Activated CD4-positive, alpha-beta T cell treated with anti-CD3 and anti-CD28 coated beads, Interleukin-2, amount 10 ng/mL, durations not matched to agents 24 days and 14 days (primary cell): ENCODE measurements at regions of chr17 and their contacts with region 1.

Region 1: DNA sequence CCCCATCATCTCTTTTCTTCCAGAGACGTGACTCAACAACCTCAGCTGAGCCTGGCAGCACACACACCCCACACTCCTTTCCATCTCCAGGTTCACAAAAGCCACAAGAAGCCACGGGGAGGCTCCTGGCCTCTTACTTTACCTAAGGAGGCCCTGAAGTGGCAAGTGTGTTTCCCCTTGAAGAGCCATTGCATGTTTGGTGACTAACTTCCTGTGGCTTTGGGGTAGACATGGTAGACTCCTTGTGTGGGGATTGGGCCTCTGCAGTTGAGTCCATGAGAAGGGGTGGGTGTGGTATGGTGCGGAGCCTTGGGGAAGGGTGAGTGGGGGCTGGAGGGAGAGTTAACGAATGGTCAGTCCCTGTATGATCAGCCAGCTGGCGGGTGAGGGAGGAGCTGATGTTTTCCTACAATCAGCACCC is 24.2 kb downstream of the SAP30BP start:
- DNase-seq: peak; percentile 79
- H3K4me3 Mint-ChIP-seq: peak overlapping the region; percentile 9
- H3K27ac Mint-ChIP-seq: peak overlapping the region; percentile 81
- H3K4me1 Mint-ChIP-seq: peaks cover 51% of the 10 kb centered on the region
- H3K27me3 Mint-ChIP-seq: no peaks in the 10 kb centered on the region

Region 2: GRCh38 chr17:73984941-73985340 is 1706.4 kb before region 1 on chr17:
- intact Hi-C with region 1: no loop called
- DNase-seq: no peak
- H3K4me3 Mint-ChIP-seq: no peak overlapping the region
- H3K27ac Mint-ChIP-seq: no peak overlapping the region
- H3K4me1 Mint-ChIP-seq: peaks cover 4% of the 10 kb centered on the region
- H3K27me3 Mint-ChIP-seq: peaks cover 3% of the 10 kb centered on the region

Region 3: DNA sequence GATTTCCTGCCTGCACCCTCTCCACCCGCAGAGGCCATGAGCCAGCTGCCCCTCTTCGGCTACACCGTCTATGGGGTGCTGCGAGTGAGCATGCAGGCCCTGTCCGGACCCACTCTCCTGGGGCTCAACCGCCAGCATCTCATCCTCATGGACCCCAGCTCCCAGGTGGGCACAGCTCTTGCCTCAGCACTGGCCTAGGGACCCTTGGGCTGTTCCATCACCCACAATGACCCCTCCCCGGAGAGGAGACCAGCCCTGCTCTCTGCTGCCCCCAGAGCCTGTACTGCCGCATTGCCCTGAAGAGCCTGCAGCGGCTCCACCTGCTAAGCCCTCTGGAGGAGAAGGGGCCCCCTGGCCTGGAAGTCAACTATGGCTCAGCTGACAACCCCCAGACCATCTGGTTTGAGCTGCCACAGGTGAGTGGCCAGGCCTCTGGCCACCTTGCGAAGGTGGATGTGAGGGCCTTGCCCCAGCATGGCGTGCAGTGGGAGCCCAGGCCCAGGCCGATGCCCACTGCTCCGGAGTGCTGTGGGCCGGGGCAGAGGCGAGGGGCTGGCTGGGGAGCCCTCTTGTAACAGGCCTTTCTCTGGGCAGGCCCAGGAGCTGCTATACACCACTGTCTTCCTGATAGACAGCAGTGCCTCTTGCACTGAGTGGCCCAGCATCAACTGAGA is 65.4 kb before region 1 on chr17:
- intact Hi-C with region 1: no loop called
- DNase-seq: peak; percentile 71
- H3K4me3 Mint-ChIP-seq: no peak overlapping the region
- H3K27ac Mint-ChIP-seq: no peak overlapping the region
- H3K4me1 Mint-ChIP-seq: no peaks in the 10 kb centered on the region
- H3K27me3 Mint-ChIP-seq: no peaks in the 10 kb centered on the region

Region 4: DNA sequence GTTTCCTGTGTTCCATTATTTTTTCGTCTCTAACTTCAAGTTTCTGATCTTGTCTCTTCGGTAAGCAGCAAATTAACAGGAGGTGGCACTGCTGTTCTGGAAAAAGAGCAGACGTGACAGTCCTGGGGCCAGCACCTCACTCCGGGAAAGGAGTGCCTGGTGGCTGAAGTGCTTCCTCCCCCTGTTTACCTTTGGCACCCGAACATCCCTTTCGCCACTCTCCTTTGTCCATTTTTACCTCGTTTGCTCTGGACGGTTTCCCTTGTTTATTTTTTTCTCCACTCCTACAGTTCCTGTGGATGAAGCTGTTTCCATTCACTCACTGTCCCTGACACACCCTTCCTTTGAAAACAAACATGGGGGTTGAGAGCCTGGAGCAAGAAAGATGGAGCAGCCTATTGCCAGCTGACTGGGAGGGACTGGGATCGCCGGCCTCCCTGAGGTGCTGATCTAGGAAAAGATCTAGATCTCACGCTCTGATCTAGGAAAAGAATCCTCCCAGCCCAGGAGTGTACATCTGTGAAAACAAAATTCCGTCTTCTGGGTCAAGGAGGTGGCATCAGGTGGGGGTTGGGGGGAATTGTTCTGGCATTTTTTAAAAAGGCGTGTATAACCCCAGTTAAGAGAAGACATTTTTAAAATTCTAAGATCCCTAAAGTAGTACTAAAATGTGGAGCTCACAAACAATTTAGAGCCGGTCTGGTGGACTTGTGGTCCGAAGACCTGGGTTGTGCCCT is 11.5 kb before region 1 on chr17:
- intact Hi-C with region 1: loop called (anchors 2 kb)
- DNase-seq: no peak
- H3K4me3 Mint-ChIP-seq: no peak overlapping the region
- H3K27ac Mint-ChIP-seq: no peak overlapping the region
- H3K4me1 Mint-ChIP-seq: peaks cover 5% of the 10 kb centered on the region
- H3K27me3 Mint-ChIP-seq: no peaks in the 10 kb centered on the region

Region 5: GRCh38 chr17:75784473-75785015 is 93.2 kb after region 1 on chr17 and contains the start of gene UNK:
- intact Hi-C with region 1: no loop called
- DNase-seq: peak; percentile 98
- H3K4me3 Mint-ChIP-seq: peak within 1 kb of the TSS; percentile 93
- H3K27ac Mint-ChIP-seq: peak within 1 kb of the TSS; percentile 100
- H3K4me1 Mint-ChIP-seq: peaks cover 44% of the 10 kb centered on the region
- H3K27me3 Mint-ChIP-seq: peaks cover 3% of the 10 kb centered on the region
- total RNA-seq, gene UNK: 28.9 and 30.0 TPM in 2 replicates